ENCODE measurements at regions of chr5 and their contacts with region 1.

Region 1: DNA sequence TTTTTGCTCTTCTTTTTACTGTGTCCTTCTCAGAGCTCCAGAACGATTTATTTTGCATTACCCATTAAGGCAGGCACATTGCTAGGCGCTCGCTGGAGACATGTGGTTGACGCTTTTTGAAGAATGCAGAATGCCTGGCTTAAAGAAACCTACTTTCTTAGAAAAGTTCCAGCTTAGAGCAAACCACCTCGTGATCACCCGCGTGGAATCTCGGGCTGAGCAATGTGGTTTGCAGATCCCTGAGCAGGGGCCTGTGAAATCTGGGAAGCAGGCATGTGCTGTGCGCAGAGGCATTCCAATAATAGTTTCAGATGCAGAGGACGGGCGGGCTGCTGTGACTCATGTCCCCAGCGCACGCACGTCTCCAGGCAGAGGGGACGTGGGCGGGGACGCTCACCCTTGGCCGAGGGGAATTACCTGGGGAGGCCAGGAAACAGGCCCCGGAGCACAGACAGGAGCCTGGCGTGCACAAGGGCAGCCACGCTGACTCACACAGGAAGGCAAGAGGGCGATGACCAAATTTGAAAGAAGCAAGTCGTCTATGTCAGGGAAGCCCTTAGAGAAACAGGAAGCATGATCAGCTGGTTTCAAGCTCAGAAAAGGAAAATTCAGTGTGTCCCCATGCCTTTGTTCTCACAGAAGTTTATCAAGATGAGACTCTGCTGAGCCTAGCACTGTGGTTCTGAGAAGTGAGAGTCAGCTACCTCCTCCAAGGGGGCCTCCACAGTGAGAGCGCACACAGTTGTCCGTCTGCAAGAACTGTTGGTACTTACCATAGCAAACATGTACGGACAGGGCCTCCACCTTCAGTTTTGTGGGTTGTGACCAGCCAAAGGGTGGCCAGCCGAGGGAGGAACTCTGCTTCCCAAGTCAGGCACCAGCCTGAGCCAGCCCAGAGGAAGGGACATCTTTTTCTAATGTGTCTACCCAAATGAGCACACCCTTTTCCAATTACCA is 218.6 kb downstream of the PIK3R1 start:
- DNase-seq: peak; percentile 84
- H3K4me3 Mint-ChIP-seq: peak overlapping the region; percentile 39
- H3K27ac Mint-ChIP-seq: peak overlapping the region; percentile 64
- H3K4me1 Mint-ChIP-seq: peaks cover 45% of the 10 kb centered on the region
- H3K27me3 Mint-ChIP-seq: peaks cover 16% of the 10 kb centered on the region

Region 2: GRCh38 chr5:67003935-67004729 is 1430.1 kb before region 1 on chr5:
- intact Hi-C with region 1: loop called (anchors 10 kb)
- DNase-seq: peak; percentile 85
- H3K4me3 Mint-ChIP-seq: peak overlapping the region; percentile 82
- H3K27ac Mint-ChIP-seq: peak overlapping the region; percentile 82
- H3K4me1 Mint-ChIP-seq: peaks cover 56% of the 10 kb centered on the region
- H3K27me3 Mint-ChIP-seq: peaks cover 17% of the 10 kb centered on the region

Region 3: GRCh38 chr5:68279984-68280383 is 154.2 kb before region 1 on chr5:
- intact Hi-C with region 1: loop called (anchors 1 kb)
- DNase-seq: peak; percentile 61
- H3K4me3 Mint-ChIP-seq: peak overlapping the region; percentile 83
- H3K27ac Mint-ChIP-seq: peak overlapping the region; percentile 87
- H3K4me1 Mint-ChIP-seq: peaks cover 81% of the 10 kb centered on the region
- H3K27me3 Mint-ChIP-seq: no peaks in the 10 kb centered on the region

Region 4: GRCh38 chr5:68343421-68343826 is 90.8 kb before region 1 on chr5:
- intact Hi-C with region 1: loop called (anchors 2 kb)
- DNase-seq: peak; percentile 20
- H3K4me3 Mint-ChIP-seq: no peak overlapping the region
- H3K27ac Mint-ChIP-seq: no peak overlapping the region
- H3K4me1 Mint-ChIP-seq: peaks cover 52% of the 10 kb centered on the region
- H3K27me3 Mint-ChIP-seq: peaks cover 7% of the 10 kb centered on the region

Region 5: GRCh38 chr5:68423154-68423811 is 10.9 kb before region 1 on chr5:
- intact Hi-C with region 1: loop called (anchors 1 kb)
- DNase-seq: no peak
- H3K4me3 Mint-ChIP-seq: peak overlapping the region; percentile 30
- H3K27ac Mint-ChIP-seq: peak overlapping the region; percentile 59
- H3K4me1 Mint-ChIP-seq: peaks cover 50% of the 10 kb centered on the region
- H3K27me3 Mint-ChIP-seq: peaks cover 16% of the 10 kb centered on the region

Region 6: GRCh38 chr5:68484307-68485068 is 50.3 kb after region 1 on chr5:
- intact Hi-C with region 1: no loop called
- DNase-seq: no peak
- H3K4me3 Mint-ChIP-seq: no peak overlapping the region
- H3K27ac Mint-ChIP-seq: no peak overlapping the region
- H3K4me1 Mint-ChIP-seq: no peaks in the 10 kb centered on the region
- H3K27me3 Mint-ChIP-seq: peaks cover 30% of the 10 kb centered on the region

Region 7: DNA sequence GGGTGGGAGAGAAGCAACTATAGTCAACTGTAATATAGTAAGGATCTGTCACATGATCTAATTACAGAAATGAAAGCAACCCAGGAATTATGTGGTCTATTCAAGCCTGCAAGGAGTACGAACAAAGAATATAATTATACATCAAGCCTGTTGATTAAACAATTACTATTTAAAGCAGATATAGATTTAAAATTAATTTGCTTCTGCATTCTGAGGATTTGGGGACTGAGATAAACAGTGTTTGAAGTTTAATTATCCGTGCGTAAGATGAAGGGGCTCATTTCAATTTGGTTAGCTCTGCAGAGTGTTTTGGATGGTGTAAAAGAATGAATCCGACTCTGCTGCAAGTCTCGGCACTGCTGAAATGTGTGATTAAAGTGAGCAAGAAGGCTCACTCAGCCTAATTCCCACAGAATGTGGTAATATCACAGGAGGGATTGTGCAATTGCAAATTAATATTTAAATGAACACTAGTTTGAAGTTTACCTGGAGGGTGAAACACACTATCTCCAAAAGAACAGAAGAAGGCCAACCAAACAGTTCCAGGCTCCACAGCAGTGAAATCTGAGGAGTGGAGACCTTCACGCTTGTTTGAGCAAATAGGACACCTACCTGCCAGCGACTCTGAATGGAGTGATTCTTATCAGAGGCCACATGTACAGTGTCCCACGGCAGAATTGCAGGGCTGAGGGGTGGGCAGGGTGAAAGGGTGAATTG is 239.1 kb after region 1 on chr5:
- intact Hi-C with region 1: no loop called
- DNase-seq: no peak
- H3K4me3 Mint-ChIP-seq: no peak overlapping the region
- H3K27ac Mint-ChIP-seq: no peak overlapping the region
- H3K4me1 Mint-ChIP-seq: peaks cover 5% of the 10 kb centered on the region
- H3K27me3 Mint-ChIP-seq: peaks cover 19% of the 10 kb centered on the region